Common myeloid progenitor, CD34-positive (primary cell): ENCODE measurements at regions of chr21 and their contacts with region 1.

Region 1: GRCh38 chr21:17679002-17679600 is 66.4 kb upstream of the BTG3 start:
- DNase-seq: peak; percentile 77 to 89 (median 86)
- H3K4me3 ChIP-seq: no peak overlapping the region
- H3K27ac ChIP-seq: no peak overlapping the region
- H3K4me1 ChIP-seq: peaks cover 0 to 5% (median 2%) of the 10 kb centered on the region in 4 experiments
- H3K27me3 ChIP-seq: peaks cover 0 to 2% (median 0%) of the 10 kb centered on the region in 5 experiments

Region 2: GRCh38 chr21:17688912-17689874 is 10.1 kb after region 1 on chr21:
- CTCF ChIA-PET with region 1: interaction called, 15 read pairs
- POLR2A ChIA-PET with region 1: no interaction called
- DNase-seq: peak; percentile 34 to 81 (median 80)
- H3K4me3 ChIP-seq: peak overlapping the region in 3 of 7 experiments; percentile 8 to 64 (median 52)
- H3K27ac ChIP-seq: peak overlapping the region in 1 of 2 experiments; percentile 49
- H3K4me1 ChIP-seq: peaks cover 0 to 22% (median 9%) of the 10 kb centered on the region in 4 experiments
- H3K27me3 ChIP-seq: no peaks in the 10 kb centered on the region

Region 3: DNA sequence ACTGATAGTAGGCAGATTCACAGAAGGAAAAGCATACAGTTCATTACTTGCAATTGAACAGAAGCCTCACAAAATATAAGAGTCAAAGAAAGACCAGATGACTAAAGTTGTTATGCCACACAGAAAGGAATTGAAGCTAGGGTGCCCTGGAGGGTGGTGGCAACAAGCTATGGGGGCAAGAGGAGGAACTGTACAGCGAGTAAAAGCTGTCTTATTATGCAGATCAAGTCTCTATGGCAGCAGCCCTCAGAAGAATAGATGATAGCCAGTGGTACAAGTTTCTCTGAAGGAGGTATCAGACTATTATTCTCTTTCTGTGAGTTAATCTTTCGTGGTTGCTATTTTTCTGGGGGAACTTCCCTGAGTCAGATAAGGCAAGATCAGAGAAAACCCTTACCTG is 67.8 kb after region 1 on chr21:
- CTCF ChIA-PET with region 1: no interaction called
- POLR2A ChIA-PET with region 1: no interaction called
- DNase-seq: no peak
- H3K4me3 ChIP-seq: no peak overlapping the region
- H3K27ac ChIP-seq: no peak overlapping the region
- H3K4me1 ChIP-seq: no peaks in the 10 kb centered on the region
- H3K27me3 ChIP-seq: no peaks in the 10 kb centered on the region

Region 4: GRCh38 chr21:17903029-17903806 is 224.1 kb after region 1 on chr21:
- CTCF ChIA-PET with region 1: interaction called, 20 read pairs
- POLR2A ChIA-PET with region 1: no interaction called
- DNase-seq: peak; percentile 46 to 69 (median 69)
- H3K4me3 ChIP-seq: no peak overlapping the region
- H3K27ac ChIP-seq: no peak overlapping the region
- H3K4me1 ChIP-seq: peaks cover 0 to 5% (median 2%) of the 10 kb centered on the region in 4 experiments
- H3K27me3 ChIP-seq: no peaks in the 10 kb centered on the region